Prostate gland (tissue), 2 donors: ENCODE measurements at regions of chr2 and their contacts with region 1.

Region 1: DNA sequence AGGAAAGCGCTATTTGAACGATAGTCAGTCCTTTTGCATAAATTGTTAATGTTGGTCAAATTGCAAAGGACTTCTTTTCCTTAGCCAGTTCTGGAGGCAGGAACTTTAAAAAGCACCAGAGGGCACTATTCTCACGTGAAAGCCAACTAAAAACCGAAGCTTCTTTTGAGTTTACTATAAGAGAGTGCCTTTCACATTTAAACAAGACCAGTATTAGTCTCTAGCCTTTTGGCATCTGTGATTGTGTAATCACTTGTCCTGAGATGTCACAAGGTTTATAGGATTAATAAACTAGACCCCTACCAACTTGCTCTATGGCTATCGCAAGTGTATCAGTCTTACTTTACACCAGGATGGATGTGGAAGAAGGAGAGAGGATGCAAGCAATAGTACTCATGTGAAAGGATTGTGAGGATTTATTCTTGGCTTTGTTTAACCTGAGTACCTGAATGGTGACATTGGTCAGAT is 14.4 kb upstream of the STAT4 start:
- DNase-seq: peak; percentile 10
- H3K4me3 ChIP-seq: no peak overlapping the region
- H3K27ac ChIP-seq: no peak overlapping the region
- H3K4me1 ChIP-seq: no peaks in the 10 kb centered on the region
- H3K27me3 ChIP-seq: no peaks in the 10 kb centered on the region
- CTCF ChIP-seq: peak; percentile 34 to 51 (median 46)
- POLR2A ChIP-seq: no peak

Region 2: DNA sequence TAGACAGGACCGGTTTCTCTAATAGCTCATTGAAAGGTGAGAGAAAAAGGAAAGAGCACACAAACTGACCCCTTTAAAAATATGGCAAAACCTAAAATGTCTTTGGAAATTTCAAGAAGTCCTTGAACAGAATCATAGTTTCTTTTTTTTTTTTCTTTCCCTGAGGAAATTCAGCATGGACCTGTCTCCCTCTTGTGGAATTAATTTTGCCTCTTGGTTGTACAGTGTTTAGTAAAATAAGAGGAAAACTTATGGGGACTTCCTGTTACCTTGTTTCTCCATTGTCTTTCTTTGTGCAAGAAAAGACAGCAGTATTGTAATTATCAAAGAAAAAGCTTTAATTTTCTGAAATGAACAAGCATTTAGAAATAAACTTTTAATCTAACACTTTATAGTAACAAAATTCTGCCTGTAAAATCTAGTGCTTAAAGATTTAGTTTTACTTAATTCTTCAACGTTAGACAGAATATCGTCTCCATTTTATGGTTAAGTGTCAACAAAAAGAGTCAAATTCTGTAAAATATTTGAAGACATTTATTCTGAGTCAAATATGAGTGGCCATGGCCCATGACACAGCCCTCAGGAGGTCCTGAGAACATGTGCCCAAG is 336.5 kb after region 1 on chr2:
- intact Hi-C with region 1: loop called (anchors 5 kb)
- DNase-seq: no peak
- H3K4me3 ChIP-seq: no peak overlapping the region
- H3K27ac ChIP-seq: no peak overlapping the region
- H3K4me1 ChIP-seq: no peaks in the 10 kb centered on the region
- H3K27me3 ChIP-seq: no peaks in the 10 kb centered on the region
- CTCF ChIP-seq: peak; percentile 46 to 82 (median 71)
- POLR2A ChIP-seq: no peak

Region 3: DNA sequence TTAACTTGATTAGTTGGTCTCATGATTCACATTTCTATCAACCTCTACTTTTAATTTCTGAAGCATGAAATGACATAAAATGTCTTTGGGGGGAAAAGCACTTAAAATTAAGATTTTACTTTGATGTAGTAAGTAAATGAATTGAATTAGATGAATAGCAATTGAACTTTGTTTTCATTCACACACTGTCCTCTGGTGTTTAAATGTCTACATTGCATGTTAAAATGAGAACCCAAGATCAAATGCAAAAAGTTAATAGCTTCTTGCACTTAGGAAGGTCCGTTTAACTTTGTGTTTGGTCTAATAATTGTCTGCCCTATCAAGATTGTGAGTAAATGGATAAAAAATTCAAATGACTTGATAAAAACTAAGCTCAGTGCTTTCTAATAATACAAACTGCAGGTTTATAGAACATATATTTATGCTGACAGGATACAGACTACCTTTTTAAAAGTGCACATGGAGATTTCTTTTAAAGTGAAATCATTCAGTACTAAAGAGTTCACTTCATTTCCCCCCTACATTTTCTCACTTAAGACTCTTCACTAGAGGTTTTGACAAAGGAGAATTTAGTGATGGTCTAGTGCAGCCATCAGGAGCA is 356.5 kb after region 1 on chr2:
- intact Hi-C with region 1: loop called (anchors 5 kb)
- DNase-seq: no peak
- H3K4me3 ChIP-seq: no peak overlapping the region
- H3K27ac ChIP-seq: no peak overlapping the region
- H3K4me1 ChIP-seq: no peaks in the 10 kb centered on the region
- H3K27me3 ChIP-seq: no peaks in the 10 kb centered on the region
- CTCF ChIP-seq: peak; percentile 38 to 86 (median 74)
- POLR2A ChIP-seq: no peak